ENCODE measurements at regions of chr22 and their contacts with region 1.

Region 1: GRCh38 chr22:20130739-20131596 is 636 bp upstream of the ZDHHC8 start:
- H3K4me3 ChIP-seq: peak overlapping the region; percentile 69
- H3K27ac ChIP-seq: peak overlapping the region; percentile 82
- H3K4me1 ChIP-seq: peaks cover 5% of the 10 kb centered on the region; the same call in 1 of the 2 replicates
- CTCF ChIP-seq: no peak

Region 2: GRCh38 chr22:20116951-20117645 is 13.9 kb before region 1 on chr22 and contains the start of gene TRMT2A:
- CTCF ChIA-PET with region 1: interaction called, 7 read pairs
- POLR2A ChIA-PET with region 1: interaction called, 62 read pairs
- H3K4me3 ChIP-seq: peak within 1 kb of the TSS; percentile 93
- H3K27ac ChIP-seq: peak within 1 kb of the TSS; percentile 88
- H3K4me1 ChIP-seq: no peaks in the 10 kb centered on the region
- CTCF ChIP-seq: peak; percentile 68

Measured in HEK293 (cell line).